ENCODE measurements at regions of chrX and their contacts with region 1.

Region 1: DNA sequence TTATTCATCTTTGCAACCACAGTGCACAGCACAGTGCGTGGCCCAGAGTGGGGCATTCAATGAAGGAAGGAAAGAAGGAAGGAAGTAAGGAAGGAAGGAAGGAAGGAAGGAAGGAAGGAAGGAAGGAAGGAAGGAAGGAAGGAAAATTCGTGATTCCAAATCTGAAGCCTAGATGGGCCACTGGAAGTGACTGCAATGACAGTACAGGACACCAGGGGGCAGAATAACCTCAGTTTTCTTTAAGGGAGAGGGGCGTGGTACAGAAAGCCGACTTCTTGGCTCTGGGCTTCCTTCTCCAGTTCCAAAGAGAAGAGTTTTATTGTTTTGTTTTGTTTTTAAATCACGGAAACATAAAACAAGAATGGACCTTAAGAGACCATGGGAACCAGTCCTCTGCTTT is 47.8 kb downstream of the APLN start:
- DNase-seq: peak; percentile 48
- H3K4me3 ChIP-seq: no peak overlapping the region
- H3K27ac ChIP-seq: no peak overlapping the region
- H3K4me1 ChIP-seq: peaks cover 12% of the 10 kb centered on the region
- H3K27me3 ChIP-seq: no peaks in the 10 kb centered on the region
- CTCF ChIP-seq: peak; percentile 42 to 51
- POLR2A ChIP-seq: no peak

Region 2: GRCh38 chrX:129637217-129638109 is 30.5 kb after region 1 on chrX:
- CTCF ChIA-PET with region 1: interaction called, 15 read pairs
- POLR2A ChIA-PET with region 1: no interaction called
- dilution Hi-C with region 1: no loop called
- intact Hi-C with region 1: loop called (anchors 1 kb)
- DNase-seq: peak; percentile 69
- H3K4me3 ChIP-seq: no peak overlapping the region
- H3K27ac ChIP-seq: peak overlapping the region; percentile 1
- H3K4me1 ChIP-seq: peaks cover 7% of the 10 kb centered on the region
- H3K27me3 ChIP-seq: no peaks in the 10 kb centered on the region
- CTCF ChIP-seq: peak; percentile 78 to 79
- POLR2A ChIP-seq: no peak

Region 3: DNA sequence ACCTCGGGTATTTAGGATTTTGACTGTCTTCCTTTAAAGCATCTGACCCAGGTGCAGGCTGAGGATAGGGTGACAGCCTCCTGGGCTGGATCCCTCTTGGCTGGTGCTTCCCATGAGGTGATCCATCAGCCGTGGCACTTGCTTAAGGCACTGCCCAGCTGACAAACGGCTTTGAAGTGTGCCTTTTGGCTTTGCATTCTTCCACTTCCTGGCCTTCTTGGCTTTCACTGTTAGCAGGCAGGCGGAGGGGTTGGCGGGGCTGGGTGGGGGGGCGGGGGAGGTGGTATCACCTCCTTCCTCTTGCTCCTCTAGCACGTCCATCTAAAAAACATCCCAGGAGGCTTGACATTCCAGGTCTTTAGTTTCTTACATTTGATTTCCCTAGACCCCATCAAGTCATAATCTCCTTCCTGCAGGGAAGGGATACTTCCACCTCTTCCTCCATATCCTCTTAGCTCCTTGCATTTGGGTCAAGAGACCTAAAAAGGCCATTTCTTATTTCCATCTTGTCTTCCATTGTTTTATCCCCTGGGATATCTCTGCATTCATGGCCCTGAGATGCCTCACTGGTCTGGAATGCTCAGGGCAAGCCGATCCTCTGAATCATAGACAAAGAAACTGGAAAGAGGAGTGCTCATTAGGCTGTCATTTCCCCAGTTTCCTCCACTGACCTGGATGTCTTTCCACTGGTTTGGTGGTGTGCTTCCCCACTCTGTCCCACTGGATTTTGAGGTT is 59.2 kb after region 1 on chrX:
- CTCF ChIA-PET with region 1: interaction called, 3 read pairs
- POLR2A ChIA-PET with region 1: no interaction called
- dilution Hi-C with region 1: no loop called
- intact Hi-C with region 1: loop called (anchors 1 kb)
- DNase-seq: peak; percentile 87
- H3K4me3 ChIP-seq: no peak overlapping the region
- H3K27ac ChIP-seq: peak overlapping the region; percentile 88
- H3K4me1 ChIP-seq: peaks cover 56% of the 10 kb centered on the region
- H3K27me3 ChIP-seq: no peaks in the 10 kb centered on the region
- CTCF ChIP-seq: no peak
- POLR2A ChIP-seq: peak; percentile 2

Region 4: DNA sequence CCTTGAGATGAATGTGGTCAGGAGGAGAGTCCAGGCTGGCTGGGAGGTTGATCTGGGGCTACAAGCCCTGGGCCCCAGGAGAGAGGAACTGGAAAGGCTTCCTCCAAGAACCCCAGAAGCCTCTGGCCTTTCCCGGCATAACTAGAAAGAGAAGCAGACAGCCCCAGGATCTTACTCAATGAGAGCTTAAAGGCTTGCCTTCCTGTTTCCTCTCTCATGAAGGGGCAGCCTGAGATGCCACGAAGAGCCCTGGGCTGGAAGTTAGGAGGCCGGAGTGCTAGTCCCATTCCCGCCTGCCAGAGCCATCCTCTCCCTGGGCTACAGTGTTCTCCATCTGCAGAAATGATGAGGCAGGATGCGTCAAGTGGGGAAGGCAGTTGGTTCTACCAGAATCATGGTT is 111.8 kb after region 1 on chrX:
- CTCF ChIA-PET with region 1: no interaction called
- POLR2A ChIA-PET with region 1: no interaction called
- dilution Hi-C with region 1: no loop called
- intact Hi-C with region 1: no loop called
- DNase-seq: no peak
- H3K4me3 ChIP-seq: no peak overlapping the region
- H3K27ac ChIP-seq: peak overlapping the region; percentile 17
- H3K4me1 ChIP-seq: peaks cover 56% of the 10 kb centered on the region
- H3K27me3 ChIP-seq: no peaks in the 10 kb centered on the region
- CTCF ChIP-seq: no peak
- POLR2A ChIP-seq: no peak

Region 5: GRCh38 chrX:129823115-129823514 is 216.2 kb after region 1 on chrX:
- CTCF ChIA-PET with region 1: interaction called, 12 read pairs
- POLR2A ChIA-PET with region 1: no interaction called
- dilution Hi-C with region 1: no loop called
- intact Hi-C with region 1: loop called (anchors 1 kb)
- DNase-seq: peak; percentile 44
- H3K4me3 ChIP-seq: no peak overlapping the region
- H3K27ac ChIP-seq: no peak overlapping the region
- H3K4me1 ChIP-seq: no peaks in the 10 kb centered on the region
- H3K27me3 ChIP-seq: no peaks in the 10 kb centered on the region
- CTCF ChIP-seq: peak; percentile 26 to 36
- POLR2A ChIP-seq: no peak

Region 6: DNA sequence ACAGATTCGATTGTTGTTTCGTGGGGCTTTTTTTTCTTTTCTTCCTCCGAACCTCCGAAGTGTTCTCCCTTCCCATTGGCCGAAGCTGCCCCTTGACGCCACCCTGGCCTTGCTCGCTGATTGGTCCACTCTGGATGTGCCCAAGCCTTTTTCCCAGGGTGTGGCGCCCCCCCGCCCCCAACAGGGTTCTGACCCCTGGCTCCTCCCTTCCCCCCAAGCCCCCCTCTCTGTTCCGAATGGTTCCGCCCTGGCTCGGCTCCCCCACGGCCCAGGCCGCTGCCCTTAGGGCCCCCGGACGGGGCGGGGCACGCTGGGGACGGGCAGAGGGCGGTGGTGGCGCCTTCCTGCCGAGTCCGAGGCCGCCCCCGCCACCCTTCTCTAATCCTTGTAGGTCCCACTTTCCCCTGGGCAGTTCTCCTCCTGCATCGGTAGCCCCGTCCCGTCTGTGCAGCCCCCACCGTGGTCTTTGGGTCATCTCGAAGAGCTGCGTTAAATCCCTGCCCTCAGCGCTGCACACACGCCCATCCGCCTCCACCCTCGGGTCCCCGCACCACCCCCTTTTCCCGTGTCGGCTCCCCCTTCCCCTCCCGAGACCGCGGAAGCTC is 324.6 kb after region 1 on chrX:
- CTCF ChIA-PET with region 1: no interaction called
- POLR2A ChIA-PET with region 1: no interaction called
- dilution Hi-C with region 1: no loop called
- intact Hi-C with region 1: loop called (anchors 5 kb)
- DNase-seq: peak; percentile 78
- H3K4me3 ChIP-seq: peak overlapping the region; percentile 69 to 74 (median 71)
- H3K27ac ChIP-seq: peak overlapping the region; percentile 68
- H3K4me1 ChIP-seq: peaks cover 6% of the 10 kb centered on the region
- H3K27me3 ChIP-seq: peaks cover 4 to 8% of the 10 kb centered on the region in 2 experiments
- CTCF ChIP-seq: no peak
- POLR2A ChIP-seq: peak; percentile 11

Region 7: GRCh38 chrX:130196466-130196865 is 589.5 kb after region 1 on chrX:
- CTCF ChIA-PET with region 1: no interaction called
- POLR2A ChIA-PET with region 1: no interaction called
- dilution Hi-C with region 1: no loop called
- intact Hi-C with region 1: loop called (anchors 10 kb)
- DNase-seq: no peak
- H3K4me3 ChIP-seq: no peak overlapping the region
- H3K27ac ChIP-seq: no peak overlapping the region
- H3K4me1 ChIP-seq: no peaks in the 10 kb centered on the region
- H3K27me3 ChIP-seq: no peaks in the 10 kb centered on the region
- CTCF ChIP-seq: no peak
- POLR2A ChIP-seq: no peak